CD8-positive, alpha-beta memory T cell (primary cell): ENCODE measurements at regions of chr15 and their contacts with region 1.

Region 1: DNA sequence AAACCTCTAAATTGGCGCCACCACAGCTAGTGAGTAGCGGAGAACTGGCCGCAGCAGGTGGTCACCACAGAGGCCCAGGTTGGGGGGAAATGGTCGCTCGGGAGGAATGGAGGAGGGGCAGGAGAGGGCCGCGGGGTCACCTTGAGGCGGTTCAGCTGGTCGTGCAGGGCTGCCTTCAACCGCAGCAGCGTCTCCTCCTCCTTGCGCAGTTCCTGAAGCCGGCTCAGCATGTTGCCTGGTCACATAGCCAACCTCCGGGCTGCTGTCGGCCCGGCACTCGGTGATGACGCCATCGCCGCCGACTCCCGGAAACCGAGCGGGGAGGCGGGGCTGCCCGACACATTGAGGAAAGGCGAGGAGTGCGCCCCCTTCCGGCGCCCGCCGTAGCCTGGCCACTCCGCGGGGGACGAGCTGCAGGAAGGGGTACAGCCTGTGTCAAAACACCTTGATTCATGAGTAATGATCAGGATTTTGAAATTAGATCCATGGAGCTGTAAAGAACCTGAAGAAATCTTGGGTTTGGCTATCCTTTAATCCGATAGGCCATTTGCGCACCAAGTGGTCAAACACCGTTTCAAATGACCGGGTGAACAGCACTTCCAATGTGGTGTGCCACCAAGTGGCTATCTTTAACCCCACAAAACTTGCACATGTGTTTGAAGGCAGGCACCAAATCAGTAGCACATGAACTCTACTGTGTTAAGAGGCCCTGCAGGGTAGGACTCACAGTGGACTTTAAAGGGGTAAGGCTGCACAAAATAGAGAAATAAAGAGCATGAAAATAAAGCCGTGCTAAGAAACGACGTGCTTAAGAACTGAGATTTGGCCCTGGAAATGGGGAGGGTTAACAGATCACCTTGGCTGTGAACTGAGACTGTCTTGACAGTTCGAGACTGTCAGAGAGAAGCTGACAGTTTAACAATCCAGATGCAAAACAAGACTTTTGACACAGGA is at the start of gene SNAPC5:
- DNase-seq: peak; percentile 96 to 98 (median 97)
- H3K4me3 ChIP-seq: peak within 1 kb of the TSS; percentile 99
- H3K4me3 Mint-ChIP-seq: peak within 1 kb of the TSS; percentile 96 to 99 (median 97)
- H3K27ac ChIP-seq: peak within 1 kb of the TSS; percentile 95
- H3K27ac Mint-ChIP-seq: peak within 1 kb of the TSS; percentile 98 to 99 (median 98)
- H3K4me1 ChIP-seq: peaks cover 41% of the 10 kb centered on the region
- H3K4me1 Mint-ChIP-seq: peaks cover 39 to 74% (median 73%) of the 10 kb centered on the region in 3 donors
- H3K27me3 ChIP-seq: no peaks in the 10 kb centered on the region
- H3K27me3 Mint-ChIP-seq: no peaks in the 10 kb centered on the region
- total RNA-seq, gene SNAPC5: 46.9 to 55.5 TPM

Region 2: GRCh38 chr15:65881766-65882434 is 615.9 kb before region 1 on chr15:
- CTCF ChIA-PET with region 1: no interaction called
- POLR2A ChIA-PET with region 1: interaction called, 17 read pairs
- DNase-seq: peak in 1 of 5 donors; percentile 29
- H3K4me3 ChIP-seq: no peak overlapping the region
- H3K4me3 Mint-ChIP-seq: no peak overlapping the region
- H3K27ac ChIP-seq: no peak overlapping the region
- H3K27ac Mint-ChIP-seq: peak overlapping the region in 3 of 8 donors; percentile 43 to 63 (median 47)
- H3K4me1 ChIP-seq: peaks cover 27% of the 10 kb centered on the region
- H3K4me1 Mint-ChIP-seq: peaks cover 31 to 63% (median 57%) of the 10 kb centered on the region in 3 donors
- H3K27me3 ChIP-seq: no peaks in the 10 kb centered on the region
- H3K27me3 Mint-ChIP-seq: no peaks in the 10 kb centered on the region

Region 3: DNA sequence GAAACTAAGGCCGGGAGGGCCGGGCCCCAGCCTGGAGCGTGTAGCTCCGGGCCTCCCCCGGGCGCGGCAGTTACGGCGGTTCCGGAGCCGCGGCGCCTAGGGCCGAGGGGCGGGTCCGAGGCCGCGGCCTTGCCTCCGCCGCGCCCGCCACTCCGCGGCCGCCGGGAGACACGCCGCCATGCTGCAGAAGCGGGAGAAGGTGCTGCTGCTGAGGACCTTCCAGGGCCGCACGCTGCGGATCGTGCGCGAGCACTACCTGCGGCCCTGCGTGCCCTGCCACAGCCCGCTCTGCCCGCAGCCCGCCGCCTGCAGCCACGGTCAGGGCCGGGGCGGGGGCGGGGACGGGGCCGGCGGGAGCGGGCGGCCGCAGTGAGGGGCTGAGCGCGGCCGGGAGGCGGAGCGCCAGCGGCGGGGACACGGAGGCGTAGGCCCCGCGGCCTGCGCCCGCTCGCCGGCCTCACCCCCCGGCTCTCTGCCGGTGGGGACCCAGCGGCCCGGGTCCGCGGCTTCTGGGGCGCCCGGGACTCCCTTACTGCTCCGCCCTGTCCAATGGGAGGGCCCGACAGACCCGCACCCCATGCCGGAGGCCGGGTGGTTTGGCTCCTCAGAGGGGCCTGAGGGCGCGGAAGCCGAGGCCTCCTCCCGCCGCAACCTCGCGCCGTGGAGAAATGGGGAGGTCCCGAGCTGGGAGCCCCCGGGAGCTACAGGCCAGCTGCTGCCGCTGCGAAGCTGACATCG is 204.2 kb before region 1 on chr15 and contains the start of gene DIS3L:
- CTCF ChIA-PET with region 1: interaction called, 25 read pairs
- POLR2A ChIA-PET with region 1: interaction called, 3 read pairs
- DNase-seq: peak; percentile 44 to 75 (median 74)
- H3K4me3 ChIP-seq: peak within 1 kb of the TSS; percentile 70
- H3K4me3 Mint-ChIP-seq: peak within 1 kb of the TSS; percentile 87 to 98 (median 89)
- H3K27ac ChIP-seq: peak within 1 kb of the TSS; percentile 80
- H3K27ac Mint-ChIP-seq: peak within 1 kb of the TSS; percentile 91 to 99 (median 96)
- H3K4me1 ChIP-seq: peaks cover 35% of the 10 kb centered on the region
- H3K4me1 Mint-ChIP-seq: peaks cover 42 to 57% (median 56%) of the 10 kb centered on the region in 3 donors
- H3K27me3 ChIP-seq: no peaks in the 10 kb centered on the region
- H3K27me3 Mint-ChIP-seq: no peaks in the 10 kb centered on the region
- total RNA-seq, gene DIS3L: 24.7 to 26.5 TPM

Region 4: DNA sequence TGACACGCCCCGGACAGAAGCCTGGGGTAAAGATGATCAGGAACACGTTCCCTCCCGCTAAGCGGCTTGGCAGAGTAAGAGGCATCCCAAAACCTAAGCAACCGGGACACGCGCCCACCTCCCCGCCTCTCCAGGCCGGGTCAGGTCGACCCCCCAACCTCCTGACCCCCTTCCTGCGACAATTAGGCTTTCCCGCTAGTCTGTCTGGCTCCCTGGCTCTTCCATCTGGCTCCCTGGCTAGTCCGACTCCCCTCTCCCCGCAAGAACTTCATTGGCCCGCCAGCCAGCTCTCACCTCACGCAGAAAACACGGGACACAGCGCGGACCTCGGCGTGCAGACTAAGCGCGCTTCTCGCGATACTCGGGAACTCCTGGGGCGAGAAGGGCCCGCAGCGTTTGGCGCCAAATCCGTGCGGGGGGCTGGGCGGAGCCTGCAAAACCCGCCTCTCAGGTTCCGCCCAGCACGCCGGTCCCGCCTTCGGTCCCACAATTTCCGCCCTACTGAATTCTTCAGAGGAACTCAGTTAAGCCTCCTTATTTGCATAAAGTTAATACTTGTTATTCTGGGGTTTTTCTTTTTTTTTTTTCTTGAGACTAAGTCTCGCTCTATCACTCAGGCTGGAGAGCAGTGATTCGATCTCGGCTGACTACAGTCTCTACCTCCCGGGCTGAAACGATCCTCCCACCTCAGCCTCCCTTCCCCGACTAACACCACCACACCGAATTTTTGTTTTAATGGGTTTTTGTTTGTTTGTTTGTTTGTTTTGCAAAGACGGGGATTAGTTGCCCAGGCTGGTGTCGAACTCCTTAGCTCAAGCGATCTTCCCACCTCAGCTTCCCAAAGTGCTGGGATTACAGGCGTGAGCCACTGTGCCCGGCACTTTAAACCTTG is 141.2 kb before region 1 on chr15 and contains the start of gene TIPIN:
- CTCF ChIA-PET with region 1: interaction called, 17 read pairs
- POLR2A ChIA-PET with region 1: no interaction called
- DNase-seq: peak; percentile 94 to 97 (median 96)
- H3K4me3 ChIP-seq: peak within 1 kb of the TSS; percentile 92
- H3K4me3 Mint-ChIP-seq: peak within 1 kb of the TSS; percentile 89 to 99 (median 95)
- H3K27ac ChIP-seq: peak within 1 kb of the TSS; percentile 78
- H3K27ac Mint-ChIP-seq: peak within 1 kb of the TSS; percentile 55 to 99 (median 96)
- H3K4me1 ChIP-seq: peaks cover 15% of the 10 kb centered on the region
- H3K4me1 Mint-ChIP-seq: peaks cover 14 to 23% (median 22%) of the 10 kb centered on the region in 3 donors
- H3K27me3 ChIP-seq: no peaks in the 10 kb centered on the region
- H3K27me3 Mint-ChIP-seq: no peaks in the 10 kb centered on the region
- total RNA-seq, gene TIPIN: 58.9 to 63.7 TPM

Region 5: DNA sequence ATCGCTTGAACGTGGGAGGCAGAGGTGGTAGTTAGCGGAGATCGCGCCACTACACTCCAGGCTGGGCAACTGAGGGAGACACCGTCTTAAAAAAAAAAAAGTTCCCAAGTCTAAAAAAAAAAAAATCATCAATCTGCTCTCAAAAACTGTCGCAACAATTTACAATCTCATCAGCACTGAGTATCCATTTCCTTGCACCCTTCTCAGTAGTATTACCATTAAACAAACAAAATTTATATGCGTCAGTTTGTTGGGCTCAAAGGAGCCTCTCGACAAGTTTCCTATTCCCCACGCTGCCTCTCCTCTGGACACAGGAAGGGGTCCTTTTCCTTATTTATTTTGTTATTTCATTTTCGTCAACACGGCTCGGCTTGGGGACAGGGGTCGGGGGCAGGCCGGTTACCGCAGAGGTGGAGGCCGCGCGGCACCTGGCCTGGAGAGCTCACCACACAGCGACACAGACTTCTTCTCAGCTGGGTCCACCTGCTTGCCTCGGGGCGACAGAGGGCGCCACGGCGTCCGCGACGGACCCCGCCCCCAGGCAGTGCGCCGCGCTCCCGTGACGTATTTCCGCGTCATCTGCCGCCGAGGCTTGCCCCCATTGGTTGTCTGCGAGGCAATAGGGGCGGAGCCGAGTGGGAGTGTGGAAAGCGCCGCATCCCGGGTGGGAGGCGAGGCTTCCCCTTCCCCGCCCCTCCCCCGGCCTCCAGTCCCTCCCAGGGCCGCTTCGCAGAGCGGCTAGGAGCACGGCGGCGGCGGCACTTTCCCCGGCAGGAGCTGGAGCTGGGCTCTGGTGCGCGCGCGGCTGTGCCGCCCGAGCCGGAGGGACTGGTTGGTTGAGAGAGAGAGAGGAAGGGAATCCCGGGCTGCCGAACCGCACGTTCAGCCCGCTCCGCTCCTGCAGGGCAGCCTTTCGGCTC is 111.3 kb before region 1 on chr15 and contains the start of gene MAP2K1:
- CTCF ChIA-PET with region 1: interaction called, 95 read pairs
- POLR2A ChIA-PET with region 1: interaction called, 18 read pairs
- DNase-seq: peak; percentile 97 to 99 (median 98)
- H3K4me3 ChIP-seq: peak within 1 kb of the TSS; percentile 74
- H3K4me3 Mint-ChIP-seq: peak within 1 kb of the TSS; percentile 88 to 99 (median 97)
- H3K27ac ChIP-seq: peak within 1 kb of the TSS; percentile 78
- H3K27ac Mint-ChIP-seq: peak within 1 kb of the TSS; percentile 89 to 100 (median 98)
- H3K4me1 ChIP-seq: peaks cover 45% of the 10 kb centered on the region
- H3K4me1 Mint-ChIP-seq: peaks cover 48 to 56% (median 56%) of the 10 kb centered on the region in 3 donors
- H3K27me3 ChIP-seq: no peaks in the 10 kb centered on the region
- H3K27me3 Mint-ChIP-seq: no peaks in the 10 kb centered on the region
- total RNA-seq, gene MAP2K1: 69.2 to 72.2 TPM

Region 6: GRCh38 chr15:66472176-66472999 is 25.4 kb before region 1 on chr15:
- CTCF ChIA-PET with region 1: interaction called, 18 read pairs
- POLR2A ChIA-PET with region 1: interaction called, 3 read pairs
- DNase-seq: peak; percentile 15 to 75 (median 70)
- H3K4me3 ChIP-seq: peak overlapping the region; percentile 21
- H3K4me3 Mint-ChIP-seq: peak overlapping the region; percentile 16 to 87 (median 74)
- H3K27ac ChIP-seq: peak overlapping the region; percentile 2
- H3K27ac Mint-ChIP-seq: peak overlapping the region; percentile 83 to 97 (median 91)
- H3K4me1 ChIP-seq: peaks cover 27% of the 10 kb centered on the region
- H3K4me1 Mint-ChIP-seq: peaks cover 34 to 51% (median 47%) of the 10 kb centered on the region in 3 donors
- H3K27me3 ChIP-seq: no peaks in the 10 kb centered on the region
- H3K27me3 Mint-ChIP-seq: no peaks in the 10 kb centered on the region

Region 7: GRCh38 chr15:66819084-66819483 is 321.3 kb after region 1 on chr15:
- CTCF ChIA-PET with region 1: no interaction called
- POLR2A ChIA-PET with region 1: no interaction called
- DNase-seq: no peak
- H3K4me3 ChIP-seq: no peak overlapping the region
- H3K4me3 Mint-ChIP-seq: no peak overlapping the region
- H3K27ac ChIP-seq: no peak overlapping the region
- H3K27ac Mint-ChIP-seq: peak overlapping the region in 1 of 8 donors; percentile 61
- H3K4me1 ChIP-seq: no peaks in the 10 kb centered on the region
- H3K4me1 Mint-ChIP-seq: no peaks in the 10 kb centered on the region
- H3K27me3 ChIP-seq: no peaks in the 10 kb centered on the region
- H3K27me3 Mint-ChIP-seq: peaks cover 4 to 16% of the 10 kb centered on the region in 2 donors